ENCODE measurements at regions of chrX and their contacts with region 1.

Region 1: DNA sequence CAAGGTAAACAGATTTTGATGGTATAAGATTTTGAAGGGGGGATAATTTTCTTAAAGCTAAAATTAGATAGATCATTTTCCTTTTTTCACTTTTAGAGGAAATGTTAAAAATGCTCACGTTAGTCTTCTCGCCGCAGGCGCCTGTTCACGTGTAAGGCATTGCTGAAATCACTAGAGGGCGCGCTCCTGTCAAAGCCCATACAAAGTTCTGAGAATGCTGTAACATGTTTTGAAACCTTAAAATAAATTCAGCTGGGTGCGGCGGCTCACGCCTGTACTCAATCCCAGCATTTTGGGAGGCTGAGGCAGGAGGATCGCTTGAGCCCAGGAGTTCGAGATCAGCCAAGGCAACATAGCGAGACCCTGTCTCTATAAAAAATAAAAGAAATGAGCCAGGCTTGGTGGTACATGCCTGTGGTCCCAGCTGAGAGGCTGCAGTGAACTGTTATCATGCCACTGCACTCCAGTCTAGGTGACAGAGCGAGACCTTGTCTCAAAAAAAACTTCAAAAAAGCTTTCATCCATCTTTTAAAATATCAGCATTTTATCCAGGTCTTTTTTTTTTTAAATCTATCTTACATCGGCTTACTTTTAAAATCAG is 138.0 kb downstream of the RBMX2 start:
- DNase-seq: peak in 6 of 9 donors; percentile 16 to 39 (median 23)
- ATAC-seq: no peak
- H3K4me3 ChIP-seq: no peak overlapping the region
- H3K4me3 Mint-ChIP-seq: no peak overlapping the region
- H3K27ac ChIP-seq: no peak overlapping the region
- H3K27ac Mint-ChIP-seq: no peak overlapping the region
- H3K4me1 ChIP-seq: no peaks in the 10 kb centered on the region
- H3K4me1 Mint-ChIP-seq: no peaks in the 10 kb centered on the region
- H3K27me3 ChIP-seq: no peaks in the 10 kb centered on the region
- H3K27me3 Mint-ChIP-seq: peaks cover 0 to 7% (median 0%) of the 10 kb centered on the region in 5 donors

Region 2: GRCh38 chrX:130516123-130516522 is 23.7 kb before region 1 on chrX:
- CTCF ChIA-PET with region 1: no interaction called
- POLR2A ChIA-PET with region 1: no interaction called
- intact Hi-C with region 1: no loop called
- DNase-seq: no peak
- ATAC-seq: no peak
- H3K4me3 ChIP-seq: no peak overlapping the region
- H3K4me3 Mint-ChIP-seq: no peak overlapping the region
- H3K27ac ChIP-seq: no peak overlapping the region
- H3K27ac Mint-ChIP-seq: no peak overlapping the region
- H3K4me1 ChIP-seq: no peaks in the 10 kb centered on the region
- H3K4me1 Mint-ChIP-seq: no peaks in the 10 kb centered on the region
- H3K27me3 ChIP-seq: no peaks in the 10 kb centered on the region
- H3K27me3 Mint-ChIP-seq: peaks cover 4 to 24% (median 22%) of the 10 kb centered on the region in 5 donors

Region 3: DNA sequence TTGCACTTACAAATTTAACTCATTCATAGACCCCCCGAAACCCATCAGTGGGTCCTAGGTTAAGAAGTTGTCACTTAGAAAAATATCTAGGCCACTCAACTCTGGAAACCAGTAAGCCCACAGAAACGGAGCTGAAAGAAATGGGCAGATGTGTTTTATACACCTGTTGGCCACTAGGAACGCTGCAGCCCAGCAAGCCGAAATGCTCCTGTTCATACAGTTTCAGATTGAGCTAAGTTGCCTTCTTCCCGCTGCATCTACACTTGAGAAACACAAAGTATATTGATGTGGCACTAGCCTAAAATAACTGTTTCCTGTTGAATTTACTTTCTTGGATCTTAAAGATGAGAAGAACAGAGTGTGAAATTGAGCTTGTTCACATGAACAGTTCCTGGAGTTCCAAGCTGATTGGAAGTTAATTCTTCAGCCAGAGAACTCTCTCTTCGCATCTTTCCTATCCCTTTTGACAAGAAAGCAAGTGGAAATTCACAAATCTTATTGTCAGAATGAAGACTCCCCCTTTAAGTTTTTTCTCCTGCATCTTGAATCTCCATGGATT is 36.1 kb after region 1 on chrX:
- CTCF ChIA-PET with region 1: no interaction called
- POLR2A ChIA-PET with region 1: no interaction called
- intact Hi-C with region 1: loop called in 1 of 2 experiments (anchors 1 kb)
- DNase-seq: peak in 3 of 9 donors; percentile 3 to 19 (median 7)
- ATAC-seq: no peak
- H3K4me3 ChIP-seq: no peak overlapping the region
- H3K4me3 Mint-ChIP-seq: peak overlapping the region in 1 of 10 donors; percentile 45
- H3K27ac ChIP-seq: no peak overlapping the region
- H3K27ac Mint-ChIP-seq: no peak overlapping the region
- H3K4me1 ChIP-seq: no peaks in the 10 kb centered on the region
- H3K4me1 Mint-ChIP-seq: no peaks in the 10 kb centered on the region
- H3K27me3 ChIP-seq: no peaks in the 10 kb centered on the region
- H3K27me3 Mint-ChIP-seq: peaks cover 0 to 12% (median 7%) of the 10 kb centered on the region in 5 donors

Region 4: DNA sequence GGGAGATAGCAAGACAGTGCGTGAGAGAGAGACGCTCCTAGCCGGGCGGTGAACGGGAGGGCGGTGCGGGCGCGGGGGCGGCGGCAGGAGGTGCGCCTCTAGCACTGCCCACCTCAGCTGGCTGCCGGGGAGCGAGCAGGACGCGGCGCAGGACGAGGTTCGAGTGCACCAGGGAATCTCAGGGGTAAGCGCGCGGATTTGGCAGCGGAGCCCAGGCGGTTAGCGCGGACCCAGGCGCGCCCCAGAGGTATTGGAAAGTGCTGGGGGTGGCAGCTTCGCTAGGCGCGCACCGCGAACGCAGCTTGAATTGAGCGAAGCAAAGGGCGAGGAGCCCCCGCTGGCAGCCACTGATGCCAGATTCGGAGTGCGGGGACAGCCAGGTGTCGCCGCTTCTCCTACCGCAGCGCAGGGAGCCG is 542.5 kb after region 1 on chrX:
- CTCF ChIA-PET with region 1: no interaction called
- POLR2A ChIA-PET with region 1: no interaction called
- intact Hi-C with region 1: no loop called
- DNase-seq: no peak
- ATAC-seq: no peak
- H3K4me3 ChIP-seq: no peak overlapping the region
- H3K4me3 Mint-ChIP-seq: no peak overlapping the region
- H3K27ac ChIP-seq: no peak overlapping the region
- H3K27ac Mint-ChIP-seq: peak overlapping the region in 1 of 9 donors; percentile 70
- H3K4me1 ChIP-seq: no peaks in the 10 kb centered on the region
- H3K4me1 Mint-ChIP-seq: peaks cover 0 to 6% (median 0%) of the 10 kb centered on the region in 7 donors
- H3K27me3 ChIP-seq: no peaks in the 10 kb centered on the region
- H3K27me3 Mint-ChIP-seq: peaks cover 48 to 65% (median 61%) of the 10 kb centered on the region in 5 donors

Measured in naive thymus-derived CD4-positive, alpha-beta T cell (primary cell).